ENCODE measurements at regions of chr11 and their contacts with region 1.

Region 1: DNA sequence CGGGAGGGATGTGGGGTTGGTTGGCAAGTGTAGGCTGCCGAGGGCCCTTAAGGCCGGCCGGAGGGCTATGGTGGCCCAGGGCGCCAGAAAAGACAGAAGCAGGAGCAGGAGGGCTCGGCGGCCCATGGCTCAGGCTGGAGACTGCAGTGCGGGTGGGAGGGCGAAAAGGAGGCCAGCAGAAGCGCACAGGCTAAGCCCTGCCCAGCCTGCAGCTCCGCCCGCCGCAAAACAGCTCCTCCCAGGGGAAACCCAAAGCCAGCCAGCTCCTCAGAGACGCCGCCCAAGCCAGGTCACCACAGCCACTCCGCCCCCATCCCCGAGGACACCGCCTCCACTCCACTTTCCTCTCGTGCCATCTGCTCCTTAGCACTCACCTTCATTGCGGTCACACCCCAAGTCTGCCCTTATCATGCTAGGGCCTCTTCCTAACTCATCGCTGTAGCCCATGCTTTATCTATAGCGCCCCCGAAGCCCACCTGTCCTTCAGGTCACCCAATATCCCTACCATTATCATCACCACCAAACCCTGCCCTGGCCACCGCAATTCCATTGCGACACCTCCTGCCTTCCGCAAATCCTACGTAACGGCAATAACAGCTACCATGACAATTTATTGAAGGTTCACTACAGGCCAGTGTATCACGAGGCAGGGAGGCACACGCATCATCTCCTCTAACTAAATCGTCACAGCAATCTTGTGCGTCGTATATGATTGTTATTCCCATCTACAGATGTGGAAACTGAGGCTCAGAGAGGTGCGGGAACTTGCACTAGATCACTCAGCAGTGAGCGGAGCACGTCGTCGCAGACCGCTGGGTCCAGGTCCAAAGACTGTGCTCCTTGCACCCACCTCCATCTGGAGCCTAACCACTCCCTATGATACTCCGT is at the start of gene PRCP:
- DNase-seq: peak; percentile 81 to 94 (median 89)
- ATAC-seq: peak; percentile 87
- H3K4me3 ChIP-seq: peak within 1 kb of the TSS; percentile 73
- H3K4me3 Mint-ChIP-seq: peak within 1 kb of the TSS; percentile 93 to 100 (median 98)
- H3K27ac ChIP-seq: peak within 1 kb of the TSS; percentile 92
- H3K27ac Mint-ChIP-seq: peak within 1 kb of the TSS; percentile 92 to 100 (median 100)
- H3K4me1 ChIP-seq: peaks cover 12 to 13% of the 10 kb centered on the region in 2 donors
- H3K4me1 Mint-ChIP-seq: peaks cover 26 to 58% (median 34%) of the 10 kb centered on the region in 7 donors
- H3K27me3 ChIP-seq: no peaks in the 10 kb centered on the region
- H3K27me3 Mint-ChIP-seq: no peaks in the 10 kb centered on the region
- total RNA-seq, gene PRCP: 19.9 to 42.3 (median 31.8) TPM

Region 2: GRCh38 chr11:82718307-82718706 is 182.2 kb before region 1 on chr11:
- CTCF ChIA-PET with region 1: no interaction called
- POLR2A ChIA-PET with region 1: no interaction called
- intact Hi-C with region 1: loop called in 1 of 2 experiments (anchors 1 kb)
- DNase-seq: peak in 5 of 9 donors; percentile 22 to 53 (median 34)
- ATAC-seq: peak; percentile 61
- H3K4me3 ChIP-seq: no peak overlapping the region
- H3K4me3 Mint-ChIP-seq: no peak overlapping the region
- H3K27ac ChIP-seq: no peak overlapping the region
- H3K27ac Mint-ChIP-seq: peak overlapping the region in 1 of 9 donors; percentile 87
- H3K4me1 ChIP-seq: no peaks in the 10 kb centered on the region
- H3K4me1 Mint-ChIP-seq: peaks cover 0 to 6% (median 4%) of the 10 kb centered on the region in 7 donors
- H3K27me3 ChIP-seq: no peaks in the 10 kb centered on the region
- H3K27me3 Mint-ChIP-seq: peaks cover 0 to 5% (median 0%) of the 10 kb centered on the region in 5 donors

Region 3: DNA sequence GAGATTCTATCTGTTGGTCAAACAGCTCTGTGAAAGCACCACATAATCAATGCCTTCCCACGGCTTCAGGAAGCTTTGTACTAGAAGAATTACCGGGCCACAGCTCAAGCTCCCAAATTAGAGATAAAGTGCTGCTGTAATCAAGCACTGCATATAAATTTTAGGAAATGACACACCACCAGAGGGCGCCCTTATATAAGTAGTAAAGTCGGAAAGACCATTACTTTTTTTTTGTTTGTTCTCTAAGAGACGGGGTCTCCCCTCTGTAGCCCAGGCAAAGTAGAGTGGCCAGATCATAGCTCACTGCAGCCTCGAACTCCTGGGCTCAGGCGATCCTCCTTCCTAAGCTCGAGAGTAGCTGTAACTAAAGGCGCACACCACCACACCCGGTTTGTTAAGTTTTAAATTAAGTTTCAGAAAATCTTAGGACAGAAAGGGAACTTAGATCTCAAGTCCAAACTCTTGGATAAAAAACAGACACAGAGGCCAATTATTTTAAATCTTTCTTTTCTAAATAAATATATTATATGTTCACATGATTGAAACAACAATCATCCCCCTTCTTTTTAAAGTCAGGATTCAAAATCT is 32.9 kb before region 1 on chr11:
- CTCF ChIA-PET with region 1: interaction called, 20 read pairs
- POLR2A ChIA-PET with region 1: interaction called, 22 read pairs
- intact Hi-C with region 1: loop called (anchors 1 kb)
- DNase-seq: peak; percentile 47 to 78 (median 73)
- ATAC-seq: peak; percentile 84
- H3K4me3 ChIP-seq: no peak overlapping the region
- H3K4me3 Mint-ChIP-seq: peak overlapping the region in 8 of 10 donors; percentile 22 to 78 (median 60)
- H3K27ac ChIP-seq: no peak overlapping the region
- H3K27ac Mint-ChIP-seq: peak overlapping the region in 5 of 9 donors; percentile 4 to 67 (median 33)
- H3K4me1 ChIP-seq: peaks cover 0 to 4% of the 10 kb centered on the region in 2 donors
- H3K4me1 Mint-ChIP-seq: peaks cover 3 to 12% (median 11%) of the 10 kb centered on the region in 7 donors
- H3K27me3 ChIP-seq: no peaks in the 10 kb centered on the region
- H3K27me3 Mint-ChIP-seq: peaks cover 0 to 7% (median 0%) of the 10 kb centered on the region in 5 donors

Region 4: GRCh38 chr11:82969811-82970210 is 69.3 kb after region 1 on chr11:
- CTCF ChIA-PET with region 1: interaction called, 3 read pairs
- POLR2A ChIA-PET with region 1: interaction called, 9 read pairs
- intact Hi-C with region 1: loop called in 1 of 2 experiments (anchors 1 kb)
- DNase-seq: peak in 2 of 9 donors; percentile 25 to 34
- ATAC-seq: no peak
- H3K4me3 ChIP-seq: no peak overlapping the region
- H3K4me3 Mint-ChIP-seq: peak overlapping the region in 7 of 10 donors; percentile 42 to 73 (median 58)
- H3K27ac ChIP-seq: no peak overlapping the region
- H3K27ac Mint-ChIP-seq: peak overlapping the region in 8 of 9 donors; percentile 68 to 93 (median 86)
- H3K4me1 ChIP-seq: peaks cover 6 to 13% of the 10 kb centered on the region in 2 donors
- H3K4me1 Mint-ChIP-seq: peaks cover 13 to 67% (median 58%) of the 10 kb centered on the region in 7 donors
- H3K27me3 ChIP-seq: no peaks in the 10 kb centered on the region
- H3K27me3 Mint-ChIP-seq: peaks cover 0 to 18% (median 0%) of the 10 kb centered on the region in 5 donors

Region 5: DNA sequence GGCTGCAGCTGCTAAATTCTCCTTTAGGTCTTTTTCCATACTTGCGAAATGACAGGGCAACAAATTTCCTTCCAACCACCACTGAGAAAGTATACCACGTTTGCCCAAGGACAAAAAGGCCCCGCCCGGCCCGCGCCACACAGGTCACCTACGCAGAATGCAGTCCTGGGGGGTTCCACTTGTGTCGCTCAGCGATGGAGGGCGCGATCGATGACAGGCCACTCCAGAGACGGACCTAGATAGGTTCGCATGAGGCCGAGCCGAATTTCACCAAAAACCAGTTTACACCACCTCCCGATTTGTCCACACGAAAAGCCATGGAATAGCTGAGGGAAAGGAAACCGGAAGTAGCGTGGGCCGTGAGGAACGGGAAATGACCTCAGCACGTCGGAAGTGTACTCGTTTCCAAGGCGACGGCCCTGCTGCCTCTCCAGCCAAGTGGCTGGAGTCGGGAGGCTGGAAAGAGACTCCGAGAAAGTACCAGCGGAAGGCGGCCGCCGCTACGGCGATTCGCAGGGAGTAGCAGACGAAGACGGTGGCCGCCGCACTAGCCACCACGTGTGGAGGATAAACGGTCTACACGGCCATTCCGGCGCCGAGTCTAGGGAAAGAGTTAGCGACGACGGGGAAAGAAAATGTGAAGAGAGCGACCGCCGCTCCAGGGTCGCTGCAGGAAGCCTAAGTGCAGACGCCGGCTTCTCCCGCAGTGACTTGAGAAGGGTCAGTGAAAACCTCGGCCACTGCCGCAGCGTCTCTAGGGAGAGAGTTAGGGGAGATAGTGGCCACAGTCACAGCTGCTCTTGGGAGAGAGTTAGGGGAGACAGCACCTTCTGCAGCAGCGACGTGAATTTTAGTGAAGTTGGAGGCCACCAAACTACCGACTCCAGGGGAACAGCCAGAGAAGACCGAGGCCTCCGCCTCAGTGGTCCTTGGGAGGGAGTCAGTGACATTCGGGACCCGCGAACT is 293.1 kb after region 1 on chr11 and contains the start of gene ANKRD42:
- CTCF ChIA-PET with region 1: no interaction called
- POLR2A ChIA-PET with region 1: interaction called, 19 read pairs
- intact Hi-C with region 1: loop called (anchors 1 kb)
- DNase-seq: peak; percentile 66 to 90 (median 87)
- ATAC-seq: peak; percentile 84
- H3K4me3 ChIP-seq: peak within 1 kb of the TSS; percentile 89
- H3K4me3 Mint-ChIP-seq: peak within 1 kb of the TSS; percentile 92 to 100 (median 98)
- H3K27ac ChIP-seq: peak within 1 kb of the TSS; percentile 99
- H3K27ac Mint-ChIP-seq: peak within 1 kb of the TSS; percentile 96 to 100 (median 99)
- H3K4me1 ChIP-seq: peaks cover 22 to 29% of the 10 kb centered on the region in 2 donors
- H3K4me1 Mint-ChIP-seq: peaks cover 33 to 61% (median 50%) of the 10 kb centered on the region in 7 donors
- H3K27me3 ChIP-seq: no peaks in the 10 kb centered on the region
- H3K27me3 Mint-ChIP-seq: no peaks in the 10 kb centered on the region
- total RNA-seq, gene ANKRD42: 3.1 to 10.9 (median 7.0) TPM